WTC11 (cell line): ENCODE measurements at regions of chr5 and their contacts with region 1.

Region 1: GRCh38 chr5:180090098-180090768 is 18.7 kb upstream of the RNF130 start:
- DNase-seq: peak; percentile 87
- ATAC-seq: peak; percentile 85
- H3K4me3 Mint-ChIP-seq: peak overlapping the region; percentile 68
- H3K27ac Mint-ChIP-seq: peak overlapping the region; percentile 84
- H3K4me1 Mint-ChIP-seq: peaks cover 40% of the 10 kb centered on the region
- H3K27me3 Mint-ChIP-seq: no peaks in the 10 kb centered on the region; the same call in 1 of the 2 replicates
- CTCF ChIP-seq: peak; percentile 97

Region 2: DNA sequence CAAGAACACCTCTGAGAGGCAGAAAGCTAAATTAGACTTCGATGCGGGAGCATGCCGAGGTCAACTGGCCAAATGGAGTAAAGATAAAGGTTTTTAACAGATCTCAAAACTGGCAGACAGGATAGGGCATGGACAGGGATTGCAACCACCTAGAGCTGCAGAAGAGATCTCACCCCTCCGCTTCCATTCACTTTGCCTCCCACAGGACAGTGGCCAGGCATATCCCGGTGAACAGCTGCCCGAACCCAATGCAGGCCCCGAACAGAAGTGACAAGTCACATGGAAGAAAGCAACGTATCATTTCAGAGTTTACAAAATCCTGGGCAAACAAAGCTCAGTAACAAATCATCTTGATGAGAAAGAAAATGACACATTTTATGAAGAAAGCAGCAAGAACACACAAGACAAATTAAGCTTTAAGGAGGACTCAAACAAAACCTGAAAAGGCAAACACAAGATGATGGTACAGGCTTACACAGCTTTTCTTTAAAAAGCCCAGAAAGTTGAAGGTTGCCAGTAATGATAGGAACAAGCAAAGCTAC is 37.1 kb before region 1 on chr5:
- CTCF ChIA-PET with region 1: interaction called, 10 read pairs
- POLR2A ChIA-PET with region 1: no interaction called
- DNase-seq: no peak
- ATAC-seq: no peak
- H3K4me3 Mint-ChIP-seq: no peak overlapping the region
- H3K27ac Mint-ChIP-seq: peak overlapping the region; percentile 12
- H3K4me1 Mint-ChIP-seq: peaks cover 73% of the 10 kb centered on the region
- H3K27me3 Mint-ChIP-seq: no peaks in the 10 kb centered on the region
- CTCF ChIP-seq: no peak